Aorta (tissue), 5 donors: ENCODE measurements at regions of chr2 and their contacts with region 1.

Region 1: DNA sequence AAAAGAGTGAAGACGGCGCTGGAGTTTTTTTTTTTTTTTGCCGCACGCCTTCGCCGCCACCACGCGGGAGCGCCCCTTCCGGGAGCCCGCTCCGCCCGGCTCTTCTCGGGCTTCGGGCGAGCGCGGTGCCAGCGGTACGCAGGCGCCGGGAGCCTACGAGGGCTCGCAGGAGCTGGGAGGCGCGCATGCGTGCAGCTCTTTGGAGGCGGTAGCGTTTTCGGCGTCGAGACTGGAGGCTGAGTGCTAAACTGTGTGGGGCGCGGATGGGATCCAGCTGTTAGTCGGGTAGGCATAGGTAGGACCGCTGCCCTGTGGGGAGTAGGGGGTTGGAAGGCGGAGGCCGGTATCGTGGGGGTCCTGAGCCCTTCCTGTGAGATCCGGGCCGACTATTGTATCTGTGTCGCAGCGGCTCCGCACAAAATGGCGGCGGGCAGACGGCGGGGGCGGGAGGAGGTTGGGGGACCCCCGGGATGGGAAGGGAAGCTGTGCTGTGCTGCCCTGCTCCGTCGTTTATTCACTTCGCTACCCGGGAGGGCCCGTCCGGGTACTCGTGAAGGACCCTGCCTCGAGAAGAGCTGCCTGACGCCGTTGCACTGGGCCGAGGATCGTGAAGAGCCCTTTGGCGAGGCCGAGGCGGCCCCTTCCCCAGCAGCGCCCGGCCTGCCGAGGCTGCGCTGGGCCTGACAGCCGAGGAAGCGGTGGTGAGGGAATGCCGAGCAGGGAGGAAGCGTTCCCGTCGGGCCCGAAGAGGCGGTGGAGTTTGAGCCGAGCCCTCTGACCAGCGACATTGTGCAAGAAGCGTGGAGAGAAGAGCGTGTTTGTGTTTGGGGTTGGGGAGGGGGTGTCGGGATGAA is at the start of gene ZNF638:
- DNase-seq: peak; percentile 97 to 98
- ATAC-seq: peak; percentile 99
- H3K4me3 ChIP-seq: peak within 1 kb of the TSS; percentile 51 to 93
- H3K27ac ChIP-seq: peak within 1 kb of the TSS; percentile 10 to 54
- H3K4me1 ChIP-seq: no peaks in the 10 kb centered on the region
- H3K27me3 ChIP-seq: no peaks in the 10 kb centered on the region
- total RNA-seq, gene ZNF638: 143 to 184 TPM

Region 2: DNA sequence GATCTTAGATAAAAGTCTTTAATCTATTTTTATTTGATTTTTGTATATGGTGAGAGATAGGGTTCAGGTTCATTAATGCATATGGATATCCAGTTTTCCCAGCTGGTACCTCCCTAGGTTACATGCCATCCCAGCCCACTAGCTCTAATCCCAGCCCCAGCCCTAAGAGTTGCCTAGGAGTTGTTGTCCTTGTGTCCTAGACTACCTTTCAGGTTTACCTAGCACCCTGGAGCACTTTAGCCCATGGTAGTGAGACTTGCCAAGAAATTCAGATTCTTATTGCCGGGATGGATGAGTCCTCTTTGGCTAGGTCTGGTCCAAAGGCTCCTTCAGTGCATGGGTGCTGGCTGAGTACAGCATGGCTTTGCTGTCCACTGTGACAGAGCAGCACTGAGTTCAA is 40.2 kb after region 1 on chr2:
- intact Hi-C with region 1: loop called in 1 of 2 experiments (anchors 5 kb)
- DNase-seq: no peak
- ATAC-seq: no peak
- H3K4me3 ChIP-seq: no peak overlapping the region
- H3K27ac ChIP-seq: no peak overlapping the region
- H3K4me1 ChIP-seq: peaks cover 0 to 3% of the 10 kb centered on the region in 2 donors
- H3K27me3 ChIP-seq: no peaks in the 10 kb centered on the region

Region 3: DNA sequence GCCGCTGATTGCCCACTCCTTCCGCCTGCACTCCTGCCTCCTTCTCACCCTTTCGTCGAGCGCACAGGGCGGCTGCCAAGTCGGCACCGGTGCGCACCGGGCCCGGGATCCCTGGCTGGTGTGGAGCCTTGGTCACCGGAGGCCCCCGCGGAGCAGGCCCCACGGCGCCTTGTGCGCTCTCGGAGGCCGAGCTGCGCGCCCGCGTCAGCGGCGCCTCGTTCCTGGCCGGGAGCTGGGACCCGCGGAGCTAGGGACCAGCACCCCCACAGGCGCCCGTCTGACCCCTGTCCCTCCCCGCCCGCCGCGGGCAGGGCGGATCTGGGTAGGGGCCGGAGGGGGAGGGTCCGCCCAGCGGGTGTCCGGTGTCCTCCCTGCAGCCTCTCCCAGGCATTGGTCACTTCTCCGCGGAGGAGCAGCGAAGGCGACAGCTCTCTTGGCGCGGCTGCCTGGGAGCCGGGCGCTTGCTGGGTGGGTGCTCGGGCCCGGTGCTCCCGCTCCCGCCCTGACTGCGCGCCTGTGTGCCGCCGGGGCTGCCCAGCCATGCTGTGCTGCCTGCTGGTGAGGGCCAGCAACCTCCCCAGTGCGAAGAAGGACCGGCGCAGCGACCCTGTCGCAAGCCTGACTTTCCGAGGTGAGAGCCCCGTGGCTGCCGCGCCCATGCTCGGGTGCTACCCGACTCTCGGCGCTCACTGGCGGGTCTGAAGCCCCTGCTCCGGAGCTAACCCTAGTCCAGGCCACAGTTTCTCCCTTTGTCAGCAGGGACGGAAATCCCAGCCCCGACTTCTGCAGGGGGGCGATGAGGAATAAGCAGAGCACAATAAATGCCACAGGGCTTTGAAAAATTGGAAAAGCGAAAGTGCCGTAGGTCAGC is 134.7 kb after region 1 on chr2:
- intact Hi-C with region 1: no loop called
- DNase-seq: peak; percentile 63 to 83
- ATAC-seq: peak; percentile 71
- H3K4me3 ChIP-seq: peak overlapping the region; percentile 20 to 69
- H3K27ac ChIP-seq: no peak overlapping the region
- H3K4me1 ChIP-seq: no peaks in the 10 kb centered on the region
- H3K27me3 ChIP-seq: no peaks in the 10 kb centered on the region

Region 4: DNA sequence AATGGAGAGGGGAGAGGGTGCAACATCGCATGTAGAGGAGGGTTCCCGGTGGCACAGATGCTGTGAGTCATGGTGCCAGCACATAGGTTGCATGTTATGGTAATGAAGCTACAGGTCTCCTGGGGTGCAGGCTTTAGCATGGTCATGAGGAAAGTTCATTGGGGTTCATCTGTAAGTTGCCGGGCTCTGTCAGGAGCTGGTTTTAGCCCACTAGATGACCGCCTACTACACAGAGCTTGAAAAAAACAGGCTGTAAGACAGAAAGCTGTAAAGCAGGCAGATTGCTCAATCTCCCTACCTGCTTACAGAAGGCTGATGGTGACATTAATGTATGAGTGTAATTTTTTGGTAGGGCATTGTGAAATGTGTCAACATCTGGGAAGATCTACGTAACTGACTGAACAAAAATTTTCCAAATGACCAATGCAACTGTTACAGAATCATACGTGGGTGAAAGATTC is 145.5 kb after region 1 on chr2:
- intact Hi-C with region 1: no loop called
- DNase-seq: no peak
- ATAC-seq: no peak
- H3K4me3 ChIP-seq: no peak overlapping the region
- H3K27ac ChIP-seq: no peak overlapping the region
- H3K4me1 ChIP-seq: no peaks in the 10 kb centered on the region
- H3K27me3 ChIP-seq: no peaks in the 10 kb centered on the region